WTC11 (cell line): ENCODE measurements at regions of chr22 and their contacts with region 1.

Region 1: GRCh38 chr22:22884010-22884887 is 3.4 kb upstream of the IGLL5 start:
- DNase-seq: peak; percentile 83
- ATAC-seq: peak; percentile 96
- H3K4me3 Mint-ChIP-seq: no peak overlapping the region
- H3K27ac Mint-ChIP-seq: no peak overlapping the region
- H3K4me1 Mint-ChIP-seq: no peaks in the 10 kb centered on the region
- H3K27me3 Mint-ChIP-seq: peaks cover 83% of the 10 kb centered on the region
- CTCF ChIP-seq: peak; percentile 58

Region 2: GRCh38 chr22:22745225-22746060 is 138.8 kb before region 1 on chr22:
- CTCF ChIA-PET with region 1: interaction called, 33 read pairs
- POLR2A ChIA-PET with region 1: no interaction called
- DNase-seq: peak; percentile 74
- ATAC-seq: peak; percentile 86
- H3K4me3 Mint-ChIP-seq: no peak overlapping the region
- H3K27ac Mint-ChIP-seq: no peak overlapping the region
- H3K4me1 Mint-ChIP-seq: peaks cover 19% of the 10 kb centered on the region
- H3K27me3 Mint-ChIP-seq: peaks cover 91% of the 10 kb centered on the region
- CTCF ChIP-seq: peak; percentile 35; the same call in 1 of the 2 replicates

Region 3: DNA sequence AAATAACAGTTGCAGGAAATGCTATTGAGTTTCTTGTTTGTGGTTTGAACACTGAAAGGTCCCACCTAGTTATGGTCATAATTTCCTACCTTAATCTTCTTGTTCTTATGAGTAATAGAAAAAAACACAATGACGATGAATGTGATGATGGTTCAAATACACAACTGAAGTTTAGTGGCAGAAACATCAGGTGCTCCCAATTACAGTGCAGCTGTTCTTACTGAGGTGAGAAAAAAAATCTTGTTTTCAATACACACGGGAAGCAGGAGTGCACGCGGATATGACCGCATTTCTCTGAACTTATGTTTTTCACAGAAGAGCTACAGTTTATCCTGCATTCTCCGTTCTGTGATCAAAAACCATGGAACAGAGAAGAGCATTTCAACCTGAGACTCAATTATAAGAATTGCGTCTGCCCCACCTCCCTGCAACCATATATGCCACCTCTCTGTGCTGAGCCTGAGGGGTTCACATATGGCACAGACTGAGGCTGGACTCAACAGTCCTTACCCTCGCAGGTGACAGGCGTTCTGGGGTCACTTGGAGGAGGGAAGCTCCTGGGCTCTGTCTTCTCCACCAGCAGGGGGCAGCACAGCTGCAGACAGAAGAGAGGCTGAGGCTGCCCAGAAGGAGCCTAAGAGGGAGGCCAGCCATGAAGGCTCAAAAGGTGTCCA is 96.3 kb before region 1 on chr22:
- CTCF ChIA-PET with region 1: interaction called, 94 read pairs
- POLR2A ChIA-PET with region 1: no interaction called
- DNase-seq: peak; percentile 82
- ATAC-seq: peak; percentile 90
- H3K4me3 Mint-ChIP-seq: no peak overlapping the region
- H3K27ac Mint-ChIP-seq: no peak overlapping the region
- H3K4me1 Mint-ChIP-seq: no peaks in the 10 kb centered on the region
- H3K27me3 Mint-ChIP-seq: peaks cover 88% of the 10 kb centered on the region
- CTCF ChIP-seq: peak; percentile 66; the same call in 1 of the 2 replicates

Region 4: DNA sequence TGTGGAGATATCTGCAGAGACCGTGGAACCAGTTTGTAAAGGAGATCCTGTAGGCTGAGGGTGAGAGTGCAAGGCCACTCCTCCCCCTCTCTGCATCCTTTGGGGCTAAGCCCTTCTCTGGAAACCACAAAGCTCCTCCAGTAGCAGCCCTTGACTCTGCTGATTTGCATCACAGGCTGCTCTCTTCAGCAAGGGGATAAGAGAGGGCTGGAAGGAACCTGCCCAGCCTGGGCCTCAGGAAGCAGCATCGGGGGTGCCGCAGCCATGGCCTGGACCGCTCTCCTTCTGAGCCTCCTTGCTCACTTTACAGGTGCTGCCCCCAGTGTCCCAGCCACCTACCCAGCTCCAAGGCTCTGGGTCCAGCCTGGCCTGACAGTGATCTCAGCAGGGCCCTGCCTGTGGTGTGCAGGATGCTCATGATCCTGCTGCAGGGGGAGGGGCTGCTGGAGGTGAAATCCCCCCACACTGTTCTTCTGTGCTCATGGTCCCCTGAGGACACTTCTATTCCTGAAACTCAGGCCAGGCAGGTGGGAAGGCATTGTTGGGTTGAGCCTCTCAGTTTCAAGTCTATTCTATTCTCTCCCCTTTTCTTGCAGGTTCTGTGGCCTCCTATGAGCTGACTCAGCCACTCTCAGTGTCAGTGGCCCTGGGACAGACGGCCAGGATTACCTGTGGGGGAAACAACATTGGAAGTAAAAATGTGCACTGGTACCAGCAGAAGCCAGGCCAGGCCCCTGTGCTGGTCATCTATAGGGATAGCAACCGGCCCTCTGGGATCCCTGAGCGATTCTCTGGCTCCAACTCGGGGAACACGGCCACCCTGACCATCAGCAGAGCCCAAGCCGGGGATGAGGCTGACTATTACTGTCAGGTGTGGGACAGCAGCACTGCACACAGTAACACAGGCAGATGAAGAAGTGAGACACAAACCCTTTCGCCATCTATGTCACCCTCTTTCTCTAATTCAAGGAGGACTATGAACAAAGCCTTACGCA is 65.1 kb before region 1 on chr22:
- CTCF ChIA-PET with region 1: interaction called, 10 read pairs
- POLR2A ChIA-PET with region 1: no interaction called
- DNase-seq: no peak
- ATAC-seq: peak; percentile 71
- H3K4me3 Mint-ChIP-seq: no peak overlapping the region
- H3K27ac Mint-ChIP-seq: no peak overlapping the region
- H3K4me1 Mint-ChIP-seq: no peaks in the 10 kb centered on the region
- H3K27me3 Mint-ChIP-seq: peaks cover 96% of the 10 kb centered on the region
- CTCF ChIP-seq: no peak

Region 5: GRCh38 chr22:22870577-22871404 is 13.5 kb before region 1 on chr22:
- CTCF ChIA-PET with region 1: interaction called, 54 read pairs
- POLR2A ChIA-PET with region 1: no interaction called
- DNase-seq: no peak
- ATAC-seq: peak; percentile 89
- H3K4me3 Mint-ChIP-seq: no peak overlapping the region
- H3K27ac Mint-ChIP-seq: no peak overlapping the region
- H3K4me1 Mint-ChIP-seq: no peaks in the 10 kb centered on the region
- H3K27me3 Mint-ChIP-seq: peaks cover 89% of the 10 kb centered on the region
- CTCF ChIP-seq: peak; percentile 12; the same call in 1 of the 2 replicates

Region 6: DNA sequence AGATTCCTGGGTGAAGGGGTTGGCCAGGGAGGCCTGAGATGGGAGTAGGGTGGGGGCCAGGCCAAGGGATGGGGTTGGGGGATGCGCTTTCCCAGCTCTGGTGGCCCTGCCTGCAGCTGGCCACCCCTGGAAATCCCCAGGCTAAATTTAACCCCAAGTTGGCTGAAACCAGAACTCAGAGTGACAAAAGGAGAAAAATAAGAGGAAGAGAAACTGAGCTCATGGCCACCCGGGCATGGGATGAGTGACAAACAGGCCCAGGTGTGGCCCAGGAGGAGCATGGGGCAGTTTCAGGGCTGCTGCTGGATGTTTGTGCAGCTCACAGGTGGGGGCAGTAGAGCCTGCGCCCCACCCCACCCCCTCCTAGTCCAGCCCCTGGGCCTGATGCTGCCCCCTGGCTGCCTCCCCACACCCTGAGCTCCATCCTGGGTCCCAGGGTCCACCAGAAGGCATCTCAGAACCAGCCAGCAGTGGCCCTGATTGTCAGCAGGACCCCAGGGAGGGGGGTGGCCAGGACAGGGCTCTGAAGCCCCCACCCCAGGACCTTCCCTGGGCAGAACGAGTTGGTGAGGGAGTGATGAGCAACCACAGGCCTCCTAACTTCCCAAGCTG is 51.4 kb after region 1 on chr22:
- CTCF ChIA-PET with region 1: interaction called, 17 read pairs
- POLR2A ChIA-PET with region 1: interaction called, 6 read pairs
- DNase-seq: peak; percentile 33
- ATAC-seq: peak; percentile 81
- H3K4me3 Mint-ChIP-seq: no peak overlapping the region
- H3K27ac Mint-ChIP-seq: no peak overlapping the region
- H3K4me1 Mint-ChIP-seq: peaks cover 5% of the 10 kb centered on the region
- H3K27me3 Mint-ChIP-seq: peaks cover 47% of the 10 kb centered on the region
- CTCF ChIP-seq: no peak

Region 7: DNA sequence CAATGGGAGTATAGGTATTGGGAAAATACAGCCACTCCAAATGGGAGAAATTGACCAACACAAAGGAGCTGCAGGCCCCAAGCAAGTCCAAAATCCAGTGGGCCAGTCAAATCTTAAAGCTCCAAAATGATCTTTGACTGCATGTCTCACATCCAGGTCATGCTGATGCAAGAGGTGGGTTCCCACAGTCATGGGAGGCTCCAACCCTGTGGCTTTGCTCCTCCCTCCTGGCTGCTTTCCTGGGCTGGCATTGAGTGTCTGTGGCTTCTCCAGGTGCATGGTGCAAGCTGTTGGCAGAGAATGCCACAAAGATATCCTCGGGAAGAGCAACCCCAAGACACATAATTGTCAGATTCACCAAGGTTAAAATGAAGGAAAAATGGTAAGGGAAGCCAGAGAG is 84.1 kb after region 1 on chr22:
- CTCF ChIA-PET with region 1: no interaction called
- POLR2A ChIA-PET with region 1: no interaction called
- DNase-seq: no peak
- ATAC-seq: no peak
- H3K4me3 Mint-ChIP-seq: no peak overlapping the region
- H3K27ac Mint-ChIP-seq: no peak overlapping the region
- H3K4me1 Mint-ChIP-seq: no peaks in the 10 kb centered on the region
- H3K27me3 Mint-ChIP-seq: peaks cover 83% of the 10 kb centered on the region
- CTCF ChIP-seq: no peak